ENCODE measurements at regions of chr7 and their contacts with region 1.

Region 1: DNA sequence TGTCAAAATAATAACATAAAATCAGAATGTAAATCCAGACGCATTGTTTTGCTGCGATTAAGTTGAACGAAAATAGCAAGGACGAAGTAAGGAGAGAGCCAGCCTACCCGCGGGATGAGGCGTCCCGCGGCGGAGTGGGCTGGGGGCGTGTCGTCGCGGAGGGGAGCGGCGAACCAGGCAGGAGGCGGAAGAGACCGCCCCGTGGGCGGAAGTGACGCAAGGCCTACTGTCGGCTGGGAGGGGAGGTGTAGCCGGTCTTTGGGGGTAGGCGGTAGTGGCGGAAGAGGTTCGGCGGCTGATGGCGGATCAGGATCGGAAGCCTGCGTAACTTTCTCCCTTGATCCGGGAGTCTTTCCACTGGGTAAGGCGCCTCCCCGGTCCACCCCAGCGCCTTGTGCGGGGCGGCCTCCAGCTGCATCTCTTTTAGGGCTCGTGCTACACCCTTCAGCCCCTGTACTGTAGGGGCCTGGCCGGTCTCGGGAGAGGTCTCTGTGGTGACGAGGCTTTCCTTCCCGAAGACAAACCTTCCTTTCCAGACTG is at the start of gene TAX1BP1:
- DNase-seq: peak; percentile 98
- ATAC-seq: peak; percentile 99
- total RNA-seq, gene TAX1BP1: 169 TPM

Region 2: DNA sequence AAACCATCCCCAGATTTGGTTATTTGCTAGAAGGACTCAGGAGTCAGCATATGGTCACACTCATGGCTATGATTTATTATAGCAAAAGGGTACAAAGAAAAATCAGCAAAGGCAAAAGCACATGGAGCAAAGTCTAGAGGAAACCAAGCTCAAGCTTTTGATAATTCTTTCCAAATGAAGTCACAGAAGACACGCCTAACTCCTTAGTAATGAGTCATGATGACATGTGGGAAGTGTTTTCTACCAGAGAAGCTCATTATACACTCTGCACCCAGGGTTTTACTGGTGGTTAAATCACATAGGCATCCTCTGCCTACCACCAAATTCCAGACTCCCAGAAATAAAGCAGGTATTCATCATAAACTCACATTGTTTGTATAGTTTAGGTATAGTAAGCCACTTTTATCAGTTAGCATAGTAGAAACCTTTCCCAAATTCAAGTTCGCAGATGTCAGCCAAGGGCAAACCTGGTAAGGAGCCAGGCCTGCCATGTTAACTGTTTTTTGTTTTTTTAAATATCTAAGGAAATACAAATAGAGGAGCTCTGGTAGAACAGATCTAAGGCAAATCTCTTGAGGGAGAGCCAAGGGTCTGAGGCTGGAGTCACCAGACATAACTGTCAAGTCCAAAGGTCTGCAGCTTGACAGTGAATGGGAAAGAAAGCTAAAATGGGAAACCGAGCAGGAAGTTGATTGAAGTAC is 61.9 kb before region 1 on chr7:
- intact Hi-C with region 1: no loop called
- DNase-seq: no peak
- ATAC-seq: peak; percentile 48

Region 3: DNA sequence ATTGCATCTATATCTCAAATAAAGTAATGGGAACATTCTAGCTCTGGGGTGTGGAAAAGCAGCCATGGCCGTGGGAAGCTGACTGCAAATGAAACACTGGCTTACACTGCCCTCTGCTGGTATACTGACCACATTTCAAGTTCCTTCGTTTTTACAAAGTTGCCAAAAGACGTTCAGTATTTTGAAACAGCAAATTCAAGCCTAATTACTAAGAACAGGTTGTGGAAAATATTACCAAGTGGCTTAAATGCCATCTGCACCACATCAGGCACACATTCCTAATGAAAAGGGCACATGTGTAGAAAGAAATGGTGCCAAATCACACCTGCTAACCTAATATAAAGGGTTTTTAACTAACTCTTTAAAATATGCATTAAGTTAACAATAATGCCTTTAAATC is 356.7 kb after region 1 on chr7:
- intact Hi-C with region 1: loop called (anchors 10 kb)
- DNase-seq: no peak
- ATAC-seq: peak; percentile 81